ENCODE measurements at regions of chr5 and their contacts with region 1.

Region 1: DNA sequence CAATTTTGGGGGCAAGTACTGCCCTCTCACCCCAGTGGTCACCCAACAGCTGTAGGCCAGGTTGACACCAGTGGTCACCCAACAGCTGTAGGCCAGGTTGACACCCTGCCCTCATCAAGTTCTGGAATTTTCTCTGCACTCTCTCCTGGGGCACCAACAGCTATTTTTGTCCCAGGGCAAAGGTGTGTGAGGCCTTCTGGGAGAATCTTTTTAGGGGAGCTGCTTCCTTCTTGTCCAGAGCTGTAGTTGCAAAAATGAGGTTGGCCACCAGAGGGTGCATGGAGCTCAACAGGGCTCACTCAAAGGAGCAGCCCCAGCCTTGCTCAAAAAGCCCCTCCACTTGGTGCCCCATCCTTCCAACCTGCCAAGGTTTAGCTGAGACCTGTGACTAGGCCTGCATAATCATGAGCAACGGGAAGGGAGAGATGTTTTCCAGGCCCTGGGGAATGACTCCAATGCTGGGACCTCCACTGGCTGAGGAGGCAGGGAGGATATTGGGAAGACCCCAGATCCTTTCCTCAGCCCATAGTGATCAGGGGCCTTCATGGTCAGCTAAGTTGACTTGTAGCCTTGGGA is 10.6 kb upstream of the P4HA2 start:
- DNase-seq: peak; percentile 68

Region 2: DNA sequence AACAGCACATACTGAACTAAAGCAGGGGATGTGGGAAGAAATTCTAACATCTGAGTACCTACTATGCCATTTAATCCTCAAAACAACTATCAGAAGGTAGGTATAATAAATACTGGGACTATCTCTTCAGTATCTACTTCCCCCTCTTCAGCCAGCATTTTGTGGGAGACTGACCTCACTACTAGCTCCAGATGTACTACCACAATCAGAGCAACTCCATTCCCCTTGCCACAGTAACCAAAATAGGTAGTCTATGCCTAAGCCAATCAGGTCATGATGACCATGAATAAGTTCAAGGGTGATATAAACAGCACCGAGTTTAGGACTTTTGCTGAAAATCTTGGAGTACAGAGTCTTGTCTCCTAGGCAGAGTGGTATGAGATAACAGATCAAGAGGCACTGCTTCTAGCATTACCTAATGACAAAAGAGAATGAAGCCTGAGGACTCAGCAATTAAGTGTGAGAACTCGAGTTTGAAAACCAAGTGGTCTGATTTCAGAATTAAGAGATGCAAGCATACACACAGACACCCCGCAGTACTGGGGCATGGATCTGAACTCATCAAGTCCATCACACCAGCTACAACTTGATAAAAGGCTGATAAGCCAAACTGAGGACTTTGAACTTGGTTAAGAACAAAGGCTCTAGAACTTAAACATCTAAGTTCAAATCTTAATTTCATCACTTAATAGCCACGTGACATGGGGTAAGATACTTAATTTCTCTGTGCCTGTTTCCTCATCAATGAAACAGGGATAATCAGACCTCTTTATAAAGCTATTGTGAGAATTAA is 451.2 kb before region 1 on chr5:
- CTCF ChIA-PET with region 1: no interaction called
- POLR2A ChIA-PET with region 1: no interaction called
- DNase-seq: no peak

Region 3: DNA sequence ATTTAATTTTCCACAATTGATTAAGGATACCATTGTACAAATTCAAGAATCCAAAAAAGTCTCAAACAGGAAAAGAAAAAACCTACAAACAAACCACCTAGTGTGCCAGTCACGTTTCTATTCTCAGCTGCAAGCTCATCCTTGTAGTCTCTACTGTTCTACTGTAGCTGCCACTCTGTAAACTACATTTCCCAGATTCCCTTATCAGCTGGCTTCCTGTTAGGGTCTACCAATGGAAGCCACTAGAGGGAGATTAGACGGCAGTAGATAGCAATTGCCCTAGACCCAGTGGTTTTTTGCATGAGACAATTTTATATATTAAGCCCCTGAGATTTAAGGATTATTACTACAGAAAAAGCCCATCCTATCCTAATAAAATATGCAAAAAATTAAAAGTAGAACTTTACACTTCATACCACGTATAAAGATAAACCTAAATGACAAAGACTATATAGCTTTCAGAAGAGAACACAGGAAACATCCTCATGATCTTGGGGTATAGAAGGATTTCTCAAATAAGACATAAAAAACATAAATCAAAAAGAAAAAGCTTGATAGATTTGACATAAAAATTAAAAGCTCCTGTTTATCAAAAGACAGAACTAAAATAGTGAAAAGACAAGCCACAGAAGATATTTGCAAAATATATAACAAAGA is 48.0 kb before region 1 on chr5:
- CTCF ChIA-PET with region 1: interaction called, 14 read pairs
- POLR2A ChIA-PET with region 1: no interaction called
- DNase-seq: peak; percentile 68

Region 4: GRCh38 chr5:132227485-132228240 is 10.6 kb before region 1 on chr5 and contains the start of gene P4HA2:
- CTCF ChIA-PET with region 1: interaction called, 30 read pairs
- POLR2A ChIA-PET with region 1: interaction called, 14 read pairs
- DNase-seq: peak; percentile 86

Region 5: GRCh38 chr5:132251220-132251725 is 13.0 kb after region 1 on chr5:
- CTCF ChIA-PET with region 1: interaction called, 16 read pairs
- POLR2A ChIA-PET with region 1: no interaction called
- DNase-seq: no peak

Region 6: DNA sequence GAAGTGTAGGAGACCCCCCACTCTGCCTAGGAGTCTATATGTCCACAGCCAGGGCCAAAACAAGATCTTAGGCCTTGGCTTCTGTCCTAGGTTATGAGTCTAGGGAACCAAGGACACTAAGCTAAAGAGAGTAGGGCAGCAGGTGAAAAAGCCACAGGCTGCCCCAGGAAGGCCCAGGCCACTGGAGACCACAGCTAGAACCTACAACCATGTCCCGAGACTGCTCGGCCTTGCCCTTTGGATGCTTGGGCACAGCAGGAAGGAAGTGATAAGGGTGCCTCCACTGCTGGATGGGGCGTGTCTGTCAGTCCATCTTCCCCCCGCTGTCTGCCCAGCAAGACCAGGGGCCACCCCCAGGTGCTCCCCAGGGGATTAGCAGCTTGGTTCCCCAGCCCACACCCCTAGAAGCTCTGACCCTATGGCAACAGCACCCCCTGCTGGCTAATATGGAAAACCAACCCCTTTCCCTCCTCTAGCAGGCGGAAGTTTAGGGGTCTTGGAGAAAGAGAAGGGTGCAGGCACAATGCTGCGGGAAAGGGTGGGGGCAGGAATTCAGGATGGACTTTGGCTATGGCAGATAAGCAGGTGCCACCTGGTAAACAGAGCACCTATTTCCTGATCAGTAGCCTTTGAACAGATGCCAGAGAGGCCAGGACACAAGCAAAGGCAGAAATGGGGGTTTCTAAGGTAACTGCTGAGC is 262.8 kb after region 1 on chr5:
- CTCF ChIA-PET with region 1: interaction called, 18 read pairs
- POLR2A ChIA-PET with region 1: no interaction called
- DNase-seq: peak; percentile 65